Posterior cingulate gyrus (tissue), 11 donors: ENCODE measurements at regions of chr20 and their contacts with region 1.

Region 1: GRCh38 chr20:45812157-45813020 is at the start of gene UBE2C:
- DNase-seq: peak; percentile 95 to 100 (median 98)

Region 2: DNA sequence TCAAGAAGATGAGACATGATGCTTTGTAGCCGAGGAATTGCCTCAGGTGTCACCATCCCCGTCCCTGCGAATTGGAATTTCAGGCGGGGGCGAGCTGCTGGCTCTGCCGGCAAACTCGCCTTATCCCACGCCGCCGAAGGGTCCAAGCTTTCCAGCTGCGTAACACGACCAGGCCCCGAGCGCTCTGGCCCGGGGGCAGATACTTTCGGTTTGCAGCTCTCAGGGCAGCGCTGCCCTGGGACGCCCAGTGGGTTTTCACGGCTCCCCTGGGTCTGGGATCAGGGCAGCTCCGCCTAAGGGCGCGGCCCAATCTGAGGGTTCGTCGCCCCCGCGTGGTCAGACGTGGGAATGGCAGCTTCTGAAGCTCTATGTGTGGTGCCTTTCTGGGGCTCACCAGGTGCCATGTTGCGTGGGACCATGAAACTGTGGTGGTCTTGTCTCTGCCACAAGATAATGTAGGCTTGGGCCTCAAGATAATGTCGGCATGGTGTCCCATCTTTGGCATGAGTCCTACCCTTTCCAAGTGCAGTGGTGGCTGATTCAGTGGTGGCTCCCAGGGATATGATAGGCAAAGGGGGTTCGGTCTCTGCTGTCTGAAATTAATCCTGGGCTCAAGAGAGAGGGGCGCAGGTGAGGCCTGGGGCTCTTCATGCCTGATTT is 375.5 kb before region 1 on chr20:
- intact Hi-C with region 1: no loop called
- DNase-seq: peak; percentile 82 to 99 (median 92)

Region 3: DNA sequence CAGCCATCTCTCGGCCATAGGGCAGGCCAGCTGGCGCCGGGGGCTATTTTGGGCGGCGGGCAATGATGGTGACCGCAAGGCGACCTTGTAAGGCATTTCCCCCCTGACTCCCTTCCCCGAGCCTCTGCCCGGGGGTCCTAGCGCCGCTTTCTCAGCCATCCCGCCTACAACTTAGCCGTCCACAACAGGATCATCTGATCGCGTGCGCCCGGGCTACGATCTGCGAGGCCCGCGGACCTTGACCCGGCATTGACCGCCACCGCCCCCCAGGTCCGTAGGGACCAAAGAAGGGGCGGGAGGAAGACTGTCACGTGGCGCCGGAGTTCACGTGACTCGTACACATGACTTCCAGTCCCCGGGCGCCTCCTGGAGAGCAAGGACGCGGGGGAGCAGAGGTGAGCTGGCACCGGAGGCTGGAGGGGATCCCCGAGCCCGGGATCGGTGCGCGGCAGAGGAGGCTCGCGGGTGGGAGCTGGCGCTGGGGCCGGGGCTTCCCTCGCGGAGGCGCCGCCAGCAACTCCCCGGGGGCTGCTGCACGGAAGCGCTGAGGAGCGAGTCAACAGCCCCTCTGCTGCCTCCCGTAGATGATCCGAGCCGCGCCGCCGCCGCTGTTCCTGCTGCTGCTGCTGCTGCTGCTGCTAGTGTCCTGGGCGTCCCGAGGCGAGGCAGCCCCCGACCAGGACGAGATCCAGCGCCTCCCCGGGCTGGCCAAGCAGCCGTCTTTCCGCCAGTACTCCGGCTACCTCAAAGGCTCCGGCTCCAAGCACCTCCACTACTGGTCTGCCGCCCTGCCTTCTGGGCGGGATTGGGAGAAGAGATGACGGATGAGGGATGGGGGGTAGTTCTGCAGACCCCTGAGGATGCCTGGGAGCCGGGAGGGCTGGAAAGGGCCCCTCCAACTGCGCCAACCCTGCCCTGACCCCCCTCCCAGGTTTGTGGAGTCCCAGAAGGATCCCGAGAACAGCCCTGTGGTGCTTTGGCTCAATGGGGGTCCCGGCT is 78.9 kb after region 1 on chr20 and contains the starts of genes CTSA and NEURL2:
- intact Hi-C with region 1: loop called (anchors 2 kb)
- DNase-seq: peak; percentile 87 to 99 (median 94)